ENCODE measurements at regions of chr7 and their contacts with region 1.

Region 1: DNA sequence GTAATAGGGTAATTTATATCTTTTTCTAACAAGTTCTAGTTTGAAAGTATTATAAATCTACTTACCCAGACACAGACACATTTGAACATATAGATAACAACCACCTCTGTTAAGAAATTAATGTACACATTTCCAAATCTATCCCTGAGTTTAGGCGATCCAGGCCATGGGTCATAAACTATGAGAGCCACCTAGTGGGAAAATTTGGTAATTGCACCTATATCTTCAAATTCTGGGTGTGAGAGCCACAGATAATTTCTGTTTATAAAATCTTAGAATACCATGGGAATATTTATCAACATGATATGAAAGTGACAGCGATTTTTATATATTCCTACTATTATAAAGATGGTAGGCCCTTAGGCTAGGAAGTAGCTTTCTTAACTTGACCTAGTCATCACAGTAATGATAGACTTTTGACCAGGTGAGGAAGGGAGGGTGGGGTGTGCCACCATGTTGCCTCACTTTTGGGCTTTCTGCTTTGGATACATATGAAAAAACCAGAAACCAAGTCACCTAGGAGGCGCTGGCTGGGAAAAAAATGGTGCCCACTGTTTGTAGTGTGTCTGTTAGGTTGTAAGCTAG is 8.0 kb upstream of the EPHA1 start:
- DNase-seq: no peak
- ATAC-seq: no peak

Region 2: GRCh38 chr7:142745091-142745635 is 671.5 kb before region 1 on chr7:
- intact Hi-C with region 1: no loop called
- DNase-seq: no peak
- ATAC-seq: no peak

Region 3: GRCh38 chr7:143240291-143241168 is 176.1 kb before region 1 on chr7:
- intact Hi-C with region 1: loop called in 1 of 2 experiments (anchors 5 kb)
- DNase-seq: peak; percentile 65
- ATAC-seq: peak; percentile 91 to 92

Region 4: DNA sequence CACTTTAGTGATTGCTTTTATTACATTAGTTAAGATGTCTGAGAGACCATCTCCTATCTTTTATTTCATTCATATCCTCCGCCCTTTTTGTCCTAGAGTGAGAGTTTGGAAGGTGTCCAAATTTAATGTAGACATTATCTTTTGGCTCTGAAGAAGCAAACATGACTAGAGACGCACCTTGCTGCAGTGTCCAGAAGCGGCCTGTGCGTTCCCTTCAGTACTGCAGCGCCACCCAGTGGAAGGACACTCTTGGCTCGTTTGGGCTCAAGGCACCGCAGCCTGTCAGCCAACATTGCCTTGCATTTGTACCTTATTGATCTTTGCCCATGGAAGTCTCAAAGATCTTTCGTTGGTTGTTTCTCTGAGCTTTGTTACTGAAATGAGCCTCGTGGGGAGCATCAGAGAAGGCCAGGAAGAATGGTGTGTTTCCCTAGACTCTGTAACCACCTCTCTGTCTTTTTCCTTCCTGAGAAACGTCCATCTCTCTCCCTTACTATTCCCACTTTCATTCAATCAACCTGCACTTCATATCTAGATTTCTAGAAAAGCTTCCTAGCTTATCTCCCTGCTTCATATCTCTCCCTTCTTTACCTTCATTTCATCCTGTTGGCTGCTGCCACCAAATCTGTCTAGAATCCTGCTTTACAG is 111.1 kb before region 1 on chr7:
- intact Hi-C with region 1: loop called in 1 of 2 experiments (anchors 10 kb)
- DNase-seq: peak; percentile 78
- ATAC-seq: peak; percentile 83 to 89

Region 5: DNA sequence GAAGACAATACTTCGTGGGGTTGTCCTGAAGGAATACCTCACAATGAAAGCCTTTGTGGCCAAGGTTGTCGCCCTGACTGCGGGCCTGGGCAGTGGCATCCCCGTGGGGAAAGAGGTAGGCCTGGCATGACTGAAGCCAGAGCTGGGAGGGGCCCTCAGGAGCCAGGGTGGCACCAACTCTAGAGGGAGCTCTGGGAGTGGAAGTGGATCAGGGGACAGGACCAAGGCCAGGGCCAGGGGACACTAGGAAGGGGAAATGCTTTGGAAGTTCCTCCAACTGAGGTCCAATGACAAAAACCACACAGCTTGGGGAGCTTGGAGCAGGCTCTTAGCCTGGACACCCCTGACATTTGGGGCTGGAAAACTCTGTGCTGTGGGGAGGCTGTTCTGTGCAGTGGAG is 94.9 kb before region 1 on chr7:
- intact Hi-C with region 1: loop called in 1 of 2 experiments (anchors 10 kb)
- DNase-seq: no peak
- ATAC-seq: peak in 1 of 2 donors; percentile 49

Region 6: DNA sequence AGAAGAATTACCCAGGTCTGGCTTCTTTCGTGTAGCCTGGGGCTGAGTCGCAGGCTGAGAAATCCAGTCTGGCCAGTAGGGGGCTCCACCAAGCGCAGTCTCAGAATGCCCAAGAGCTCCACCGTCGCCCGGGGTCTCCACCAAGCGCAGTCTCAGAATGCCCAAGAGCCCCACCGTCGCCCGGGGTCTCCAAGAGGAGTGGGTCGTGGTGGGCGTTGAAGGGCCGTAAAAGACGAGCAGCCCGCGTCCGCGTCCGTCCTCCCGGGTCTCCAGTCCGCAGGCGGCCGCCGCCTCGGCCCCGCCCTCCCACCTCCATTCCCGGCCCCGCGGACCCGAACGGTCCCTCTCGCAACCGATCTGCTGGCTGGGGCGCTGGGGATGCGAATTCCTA is 36.4 kb before region 1 on chr7:
- intact Hi-C with region 1: loop called in 1 of 2 experiments (anchors 2 kb)
- DNase-seq: peak; percentile 89
- ATAC-seq: peak; percentile 73 to 76

Measured in left cardiac atrium (tissue), 4 donors.